Activated naive CD4-positive, alpha-beta T cell treated with anti-CD3 and anti-CD28 coated beads for 36 hours (primary cell): ENCODE measurements at regions of chr2 and their contacts with region 1.

Region 1: GRCh38 chr2:113138428-113139322 is 11.3 kb downstream of the IL1RN start:
- DNase-seq: peak; percentile 65
- H3K4me3 Mint-ChIP-seq: peak overlapping the region; percentile 25
- H3K27ac Mint-ChIP-seq: peak overlapping the region; percentile 30
- H3K4me1 Mint-ChIP-seq: peaks cover 29% of the 10 kb centered on the region
- H3K27me3 Mint-ChIP-seq: no peaks in the 10 kb centered on the region

Region 2: GRCh38 chr2:112301171-112301584 is 837.5 kb before region 1 on chr2:
- CTCF ChIA-PET with region 1: no interaction called
- intact Hi-C with region 1: no loop called
- DNase-seq: no peak
- H3K4me3 Mint-ChIP-seq: no peak overlapping the region
- H3K27ac Mint-ChIP-seq: no peak overlapping the region
- H3K4me1 Mint-ChIP-seq: peaks cover 14% of the 10 kb centered on the region
- H3K27me3 Mint-ChIP-seq: no peaks in the 10 kb centered on the region

Region 3: GRCh38 chr2:112772322-112772721 is 366.4 kb before region 1 on chr2:
- CTCF ChIA-PET with region 1: no interaction called
- intact Hi-C with region 1: no loop called
- DNase-seq: no peak
- H3K4me3 Mint-ChIP-seq: no peak overlapping the region
- H3K27ac Mint-ChIP-seq: no peak overlapping the region
- H3K4me1 Mint-ChIP-seq: peaks cover 19% of the 10 kb centered on the region
- H3K27me3 Mint-ChIP-seq: no peaks in the 10 kb centered on the region

Region 4: DNA sequence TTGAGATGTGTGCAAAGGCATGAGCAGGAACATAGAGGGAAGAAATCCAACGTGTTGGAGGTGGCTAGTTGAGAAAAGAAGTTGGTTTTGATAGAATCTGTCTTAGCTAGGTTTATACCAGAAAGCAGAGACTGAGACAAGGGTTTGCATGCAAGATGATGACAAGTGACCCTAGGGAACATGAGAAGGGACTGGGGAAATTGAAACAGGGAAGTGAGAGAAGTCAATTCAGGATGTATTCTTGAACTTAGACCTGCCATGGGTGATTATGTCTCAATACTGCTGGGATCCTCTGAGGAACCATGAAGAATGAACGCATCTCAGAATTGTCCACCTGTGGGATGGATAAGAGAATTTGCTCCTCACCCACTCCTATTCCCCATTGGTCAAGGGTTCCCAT is 112.9 kb before region 1 on chr2:
- CTCF ChIA-PET with region 1: no interaction called
- intact Hi-C with region 1: no loop called
- DNase-seq: no peak
- H3K4me3 Mint-ChIP-seq: no peak overlapping the region
- H3K27ac Mint-ChIP-seq: no peak overlapping the region
- H3K4me1 Mint-ChIP-seq: no peaks in the 10 kb centered on the region
- H3K27me3 Mint-ChIP-seq: no peaks in the 10 kb centered on the region

Region 5: DNA sequence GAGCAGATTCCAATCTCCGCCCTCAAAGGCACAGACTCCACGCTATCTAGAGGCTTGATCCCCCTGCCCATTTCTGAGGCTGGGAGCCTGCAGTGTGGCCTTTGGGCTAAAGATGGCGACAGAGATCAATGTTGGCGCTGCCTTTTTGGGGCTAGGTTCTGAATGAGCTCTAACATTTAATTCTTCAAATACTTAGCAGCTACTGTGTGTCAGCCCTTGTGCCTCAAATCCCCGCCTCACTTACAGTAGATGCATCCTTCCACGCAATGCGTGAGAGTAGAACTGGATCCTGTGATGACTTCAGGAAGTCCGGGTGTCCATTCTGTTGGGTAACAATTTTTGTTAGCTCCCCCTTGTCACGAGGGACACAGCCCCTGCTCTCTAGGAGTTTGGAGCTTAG is 58.5 kb before region 1 on chr2:
- CTCF ChIA-PET with region 1: interaction called, 102 read pairs
- intact Hi-C with region 1: loop called (anchors 1 kb)
- DNase-seq: peak; percentile 73
- H3K4me3 Mint-ChIP-seq: no peak overlapping the region
- H3K27ac Mint-ChIP-seq: no peak overlapping the region
- H3K4me1 Mint-ChIP-seq: peaks cover 12% of the 10 kb centered on the region
- H3K27me3 Mint-ChIP-seq: no peaks in the 10 kb centered on the region

Region 6: DNA sequence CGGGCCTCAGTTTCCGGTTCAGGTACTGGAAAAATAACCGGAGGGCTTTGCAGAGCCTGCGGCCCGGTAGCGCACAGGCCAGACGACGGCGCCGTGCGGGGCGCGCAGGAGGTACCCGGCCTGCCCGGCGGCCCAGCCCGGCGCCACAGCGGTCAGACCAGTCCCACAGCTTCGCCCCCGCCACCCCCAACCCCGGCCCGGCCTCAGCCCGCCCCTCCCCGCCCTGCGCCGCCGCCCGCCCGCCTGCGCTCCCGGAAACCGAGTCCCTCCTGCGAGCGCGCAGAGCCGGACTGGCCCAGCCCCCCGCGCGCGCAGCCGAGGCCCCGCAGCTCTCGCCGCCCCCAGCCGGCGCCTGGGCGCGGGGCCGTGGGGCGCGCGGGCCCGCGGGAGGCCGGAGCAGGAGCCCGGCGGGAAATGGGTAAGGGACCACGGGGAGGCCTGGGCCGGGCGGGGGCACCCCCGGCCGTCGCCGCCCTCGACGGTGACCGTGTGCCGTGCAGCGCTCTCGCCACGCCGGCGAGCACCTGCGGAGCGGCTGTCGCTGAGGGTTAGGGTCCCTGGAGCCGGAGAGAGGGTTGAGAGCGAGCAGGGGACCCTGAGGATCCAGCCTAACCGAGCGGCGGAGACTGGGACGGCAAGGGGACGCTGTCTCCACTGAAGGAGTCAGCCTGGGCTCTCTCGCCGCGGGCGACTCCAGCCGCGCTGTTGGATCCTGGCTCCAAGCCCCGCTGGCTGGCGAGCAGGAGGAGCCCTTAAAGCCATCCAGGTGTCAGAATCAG is 18.6 kb after region 1 on chr2:
- CTCF ChIA-PET with region 1: interaction called, 62 read pairs
- intact Hi-C with region 1: loop called (anchors 1 kb)
- DNase-seq: peak; percentile 67
- H3K4me3 Mint-ChIP-seq: peak overlapping the region; percentile 82
- H3K27ac Mint-ChIP-seq: peak overlapping the region; percentile 86
- H3K4me1 Mint-ChIP-seq: peaks cover 23% of the 10 kb centered on the region
- H3K27me3 Mint-ChIP-seq: no peaks in the 10 kb centered on the region

Region 7: GRCh38 chr2:113181258-113182051 is 42.8 kb after region 1 on chr2:
- CTCF ChIA-PET with region 1: interaction called, 95 read pairs
- intact Hi-C with region 1: loop called (anchors 1 kb)
- DNase-seq: no peak
- H3K4me3 Mint-ChIP-seq: no peak overlapping the region
- H3K27ac Mint-ChIP-seq: peak overlapping the region; percentile 77
- H3K4me1 Mint-ChIP-seq: peaks cover 86% of the 10 kb centered on the region
- H3K27me3 Mint-ChIP-seq: no peaks in the 10 kb centered on the region

Region 8: DNA sequence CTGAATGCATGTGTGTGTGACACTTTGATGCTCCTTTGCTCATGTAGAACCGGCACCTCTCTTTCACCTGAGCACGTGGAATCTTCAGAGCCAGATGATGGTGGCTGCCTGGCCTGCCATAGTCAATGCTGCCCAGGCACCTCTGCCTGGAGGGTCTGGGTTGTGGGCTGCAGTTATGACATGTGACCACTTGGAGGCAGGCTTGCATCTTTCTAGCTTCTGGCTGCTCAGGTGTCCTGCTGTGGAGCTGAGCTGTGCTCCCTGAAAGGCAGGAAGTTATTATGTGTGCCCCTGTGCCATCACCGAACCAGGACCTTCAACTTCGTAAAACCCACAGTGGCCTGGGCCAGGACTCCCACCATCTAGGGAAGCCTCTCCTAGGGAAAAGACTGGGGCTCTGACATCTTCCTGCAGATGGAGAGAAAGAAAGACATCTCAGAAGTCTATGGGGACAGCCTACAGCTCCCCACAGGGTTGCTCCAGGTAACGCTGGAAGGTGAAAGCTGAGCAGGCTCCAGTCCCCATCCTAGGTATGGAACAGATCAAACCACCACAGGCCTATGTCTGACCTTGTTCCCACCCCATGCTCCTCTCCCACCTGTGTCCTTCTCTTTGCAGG is 65.3 kb after region 1 on chr2:
- CTCF ChIA-PET with region 1: interaction called, 157 read pairs
- intact Hi-C with region 1: loop called (anchors 1 kb)
- DNase-seq: peak; percentile 87
- H3K4me3 Mint-ChIP-seq: no peak overlapping the region
- H3K27ac Mint-ChIP-seq: peak overlapping the region; percentile 82
- H3K4me1 Mint-ChIP-seq: peaks cover 15% of the 10 kb centered on the region
- H3K27me3 Mint-ChIP-seq: no peaks in the 10 kb centered on the region

Region 9: DNA sequence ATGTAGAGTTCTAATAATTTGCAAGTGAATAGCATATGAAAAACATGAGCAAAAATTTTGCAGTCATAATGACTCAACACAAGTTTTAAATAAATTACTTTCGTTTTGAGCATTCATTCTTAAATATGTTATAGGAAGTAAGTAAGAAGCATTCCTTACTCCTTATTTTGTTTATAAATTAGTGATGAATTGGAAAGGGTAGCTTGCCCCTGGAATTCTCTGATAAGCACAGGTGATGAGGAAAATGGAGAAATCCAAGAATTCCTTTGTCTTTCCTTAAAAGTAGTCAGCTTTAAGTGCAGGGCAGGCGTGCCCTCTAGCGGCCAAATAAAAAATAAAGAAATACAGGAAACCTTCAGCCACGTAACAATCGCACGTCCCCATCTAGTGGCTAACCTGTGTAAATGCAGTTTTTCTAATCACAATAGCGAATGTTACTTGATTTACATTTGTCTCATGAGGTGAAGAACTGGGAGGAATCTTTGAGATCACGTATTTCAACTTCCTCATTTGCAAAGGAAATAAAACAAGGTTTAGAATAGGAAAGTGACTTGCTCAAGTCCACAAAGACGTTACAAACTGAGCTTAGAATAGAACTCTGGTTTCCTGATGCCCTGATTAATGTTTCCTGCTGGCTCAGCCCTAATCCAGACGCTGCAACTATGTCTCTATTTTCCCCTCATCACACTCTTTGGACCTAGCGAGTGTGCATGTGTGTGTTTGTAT is 251.6 kb after region 1 on chr2:
- CTCF ChIA-PET with region 1: interaction called, 4 read pairs
- intact Hi-C with region 1: loop called (anchors 5 kb)
- DNase-seq: peak; percentile 70
- H3K4me3 Mint-ChIP-seq: peak overlapping the region; percentile 35
- H3K27ac Mint-ChIP-seq: peak overlapping the region; percentile 61
- H3K4me1 Mint-ChIP-seq: peaks cover 15% of the 10 kb centered on the region
- H3K27me3 Mint-ChIP-seq: peaks cover 3% of the 10 kb centered on the region